Activated naive CD4-positive, alpha-beta T cell treated with anti-CD3 and anti-CD28 coated beads for 36 hours (primary cell): ENCODE measurements at regions of chr6 and their contacts with region 1.

Region 1: GRCh38 chr6:144149891-144150709 is at the start of gene STX11:
- DNase-seq: peak; percentile 91
- H3K4me3 Mint-ChIP-seq: peak within 1 kb of the TSS; percentile 81
- H3K27ac Mint-ChIP-seq: peak within 1 kb of the TSS; percentile 93
- H3K4me1 Mint-ChIP-seq: peaks cover 40% of the 10 kb centered on the region
- H3K27me3 Mint-ChIP-seq: no peaks in the 10 kb centered on the region
- total RNA-seq, gene STX11: 17.2 to 17.5 TPM

Region 2: DNA sequence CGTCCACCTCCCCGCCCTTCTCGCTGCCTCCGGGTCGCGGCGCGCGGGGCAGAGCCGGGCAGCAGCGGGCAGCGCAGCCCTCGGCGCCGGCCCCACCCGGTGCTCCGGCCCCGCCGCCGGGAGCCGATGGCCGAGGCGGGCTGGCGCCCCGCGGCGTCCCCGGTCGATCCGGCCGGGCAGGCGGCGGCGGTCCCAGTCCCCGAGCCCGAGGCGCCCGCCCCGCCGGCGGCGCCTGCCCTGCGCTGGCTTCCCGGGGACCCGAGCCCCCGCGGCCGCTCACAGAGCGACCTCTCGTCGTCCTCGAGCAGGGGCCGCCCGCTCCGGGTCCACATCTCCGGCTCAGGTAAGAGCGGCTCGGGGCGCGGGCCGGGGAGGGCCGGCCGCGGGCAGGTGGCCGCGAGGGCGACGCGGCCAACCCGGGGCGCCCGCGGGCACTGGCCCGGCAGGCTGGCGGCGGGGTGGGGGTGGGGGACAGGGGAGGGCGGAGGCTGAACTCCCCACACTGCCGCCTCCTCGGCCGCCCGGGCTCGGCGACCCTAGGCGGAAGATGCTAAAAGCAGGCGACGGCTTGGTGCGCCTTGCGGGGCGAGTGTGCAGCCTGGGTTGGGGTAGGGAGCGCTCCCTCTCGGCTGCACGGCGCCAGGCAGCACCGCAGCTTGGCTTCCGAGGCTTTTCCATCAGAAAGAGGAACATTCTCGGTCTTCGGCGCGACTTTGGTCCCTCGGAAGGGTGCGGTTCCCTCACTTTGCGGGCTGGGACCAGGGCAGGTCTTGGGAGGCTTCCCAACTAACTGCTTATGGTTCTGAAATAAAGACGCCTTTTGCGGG is 613.0 kb before region 1 on chr6:
- CTCF ChIA-PET with region 1: no interaction called
- intact Hi-C with region 1: loop called (anchors 5 kb)
- DNase-seq: peak; percentile 71
- H3K4me3 Mint-ChIP-seq: peak overlapping the region; percentile 76
- H3K27ac Mint-ChIP-seq: peak overlapping the region; percentile 15
- H3K4me1 Mint-ChIP-seq: peaks cover 35% of the 10 kb centered on the region
- H3K27me3 Mint-ChIP-seq: no peaks in the 10 kb centered on the region

Region 3: GRCh38 chr6:144055121-144055931 is 94.8 kb before region 1 on chr6:
- CTCF ChIA-PET with region 1: no interaction called
- intact Hi-C with region 1: loop called (anchors 1 kb)
- DNase-seq: peak; percentile 70
- H3K4me3 Mint-ChIP-seq: peak overlapping the region; percentile 76
- H3K27ac Mint-ChIP-seq: peak overlapping the region; percentile 91
- H3K4me1 Mint-ChIP-seq: peaks cover 26% of the 10 kb centered on the region
- H3K27me3 Mint-ChIP-seq: no peaks in the 10 kb centered on the region

Region 4: GRCh38 chr6:144104898-144105487 is 45.1 kb before region 1 on chr6:
- CTCF ChIA-PET with region 1: interaction called, 3 read pairs
- intact Hi-C with region 1: loop called (anchors 1 kb)
- DNase-seq: peak; percentile 48
- H3K4me3 Mint-ChIP-seq: no peak overlapping the region
- H3K27ac Mint-ChIP-seq: no peak overlapping the region
- H3K4me1 Mint-ChIP-seq: peaks cover 11% of the 10 kb centered on the region
- H3K27me3 Mint-ChIP-seq: no peaks in the 10 kb centered on the region

Region 5: GRCh38 chr6:144179828-144180227 is 29.7 kb after region 1 on chr6:
- CTCF ChIA-PET with region 1: no interaction called
- intact Hi-C with region 1: loop called (anchors 1 kb)
- DNase-seq: no peak
- H3K4me3 Mint-ChIP-seq: no peak overlapping the region
- H3K27ac Mint-ChIP-seq: no peak overlapping the region
- H3K4me1 Mint-ChIP-seq: peaks cover 55% of the 10 kb centered on the region
- H3K27me3 Mint-ChIP-seq: no peaks in the 10 kb centered on the region

Region 6: DNA sequence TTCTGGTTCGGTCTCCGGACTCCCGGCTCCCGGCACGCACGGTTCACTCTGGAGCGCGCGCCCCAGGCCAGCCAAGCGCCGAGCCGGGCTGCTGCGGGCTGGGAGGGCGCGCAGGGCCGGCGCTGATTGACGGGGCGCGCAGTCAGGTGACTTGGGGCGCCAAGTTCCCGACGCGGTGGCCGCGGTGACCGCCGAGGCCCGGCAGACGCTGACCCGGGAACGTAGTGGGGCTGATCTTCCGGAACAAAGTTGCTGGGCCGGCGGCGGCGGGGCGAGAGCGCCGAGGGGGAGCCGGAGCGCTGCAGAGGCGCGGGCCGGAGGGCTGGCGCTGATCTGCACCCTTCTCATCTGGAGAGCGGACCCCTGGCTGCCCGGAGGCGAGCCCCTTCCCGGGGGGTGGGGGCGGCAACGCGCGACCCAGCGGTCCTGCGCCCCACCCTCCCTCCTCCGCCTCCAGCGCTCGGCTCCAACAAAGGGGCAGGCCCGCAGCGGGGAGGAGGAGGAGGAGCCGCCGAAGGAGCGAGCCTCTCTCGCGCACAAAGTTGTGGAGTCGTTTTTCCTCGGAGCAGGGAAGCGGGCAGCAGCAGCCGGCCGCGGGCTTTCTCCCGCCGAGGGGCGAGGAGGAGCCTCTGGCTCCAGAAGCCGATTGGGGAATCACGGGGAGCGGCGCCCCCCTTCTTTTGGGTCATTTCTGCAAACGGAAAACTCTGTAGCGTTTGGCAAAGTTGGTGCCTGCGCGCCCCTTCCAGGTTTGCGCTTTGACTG is 134.9 kb after region 1 on chr6 and contains the start of gene UTRN:
- CTCF ChIA-PET with region 1: no interaction called
- intact Hi-C with region 1: loop called (anchors 1 kb)
- DNase-seq: peak; percentile 64
- H3K4me3 Mint-ChIP-seq: peak within 1 kb of the TSS; percentile 86
- H3K27ac Mint-ChIP-seq: no peak within 1 kb of the TSS
- H3K4me1 Mint-ChIP-seq: peaks cover 12% of the 10 kb centered on the region
- H3K27me3 Mint-ChIP-seq: peaks cover 21% of the 10 kb centered on the region
- total RNA-seq, gene UTRN: 35.3 to 39.9 TPM